K562 (cell line): ENCODE measurements at regions of chr1 and their contacts with region 1.

Region 1: DNA sequence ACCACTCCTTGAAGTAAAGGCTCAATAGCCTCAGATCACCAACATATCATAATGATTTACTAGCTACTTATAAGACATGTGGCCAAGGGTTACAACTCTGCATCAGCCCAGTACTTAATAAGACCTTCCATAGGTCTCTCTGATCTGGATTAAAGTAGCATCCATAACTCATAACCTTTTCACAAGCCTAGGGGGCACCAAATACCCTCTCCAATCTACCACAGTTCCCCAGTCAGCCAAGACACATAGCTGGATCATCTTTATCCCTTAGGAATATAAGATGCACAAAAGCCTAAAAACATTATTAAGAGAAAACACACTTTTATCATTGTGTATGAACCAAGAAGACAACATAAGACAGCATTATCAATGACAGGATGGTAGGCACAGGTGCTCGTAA is 22.1 kb downstream of the SSX2IP start:
- DNase-seq: peak in 3 of 4 experiments; percentile 13 to 40 (median 28)
- ATAC-seq: peak; percentile 86
- H3K4me3 ChIP-seq: no peak overlapping the region
- H3K27ac ChIP-seq: no peak overlapping the region
- H3K4me1 ChIP-seq: peaks cover 3 to 5% of the 10 kb centered on the region in 2 experiments; a peak in 2 of 5 replicates
- H3K27me3 ChIP-seq: no peaks in the 10 kb centered on the region
- CTCF ChIP-seq: peak; percentile 43 to 68 (median 48); a peak in 5 of 6 replicates
- EP300 ChIP-seq: no peak
- POLR2A ChIP-seq: no peak
- RAD21 ChIP-seq: peak; percentile 58 to 76

Region 2: GRCh38 chr1:84690397-84691121 is 22.4 kb after region 1 on chr1 and contains the start of gene SSX2IP:
- CTCF ChIA-PET with region 1: no interaction called
- POLR2A ChIA-PET with region 1: interaction called, 56 read pairs
- in situ Hi-C with region 1: no loop called
- intact Hi-C with region 1: no loop called
- DNase-seq: peak; percentile 98 to 100 (median 100)
- ATAC-seq: peak; percentile 82
- H3K4me3 ChIP-seq: peak within 1 kb of the TSS; percentile 76
- H3K27ac ChIP-seq: peak within 1 kb of the TSS; percentile 92
- H3K4me1 ChIP-seq: peaks cover 17 to 33% of the 10 kb centered on the region in 2 experiments
- H3K27me3 ChIP-seq: no peaks in the 10 kb centered on the region; a peak in 1 of 5 replicates
- CTCF ChIP-seq: no peak; a peak in 2 of 6 replicates
- EP300 ChIP-seq: peak; percentile 41
- POLR2A ChIP-seq: peak; percentile 53
- RAD21 ChIP-seq: no peak
- polyA plus RNA-seq, gene SSX2IP: 20.6 to 25.8 TPM